K562 (cell line): ENCODE measurements at regions of chr6 and their contacts with region 1.

Region 1: GRCh38 chr6:43900911-43901732 is 131.1 kb downstream of the VEGFA start:
- DNase-seq: no peak
- ATAC-seq: no peak; the same call in 1 of the 3 replicates
- H3K4me3 ChIP-seq: no peak overlapping the region
- H3K27ac ChIP-seq: no peak overlapping the region; the same call in 2 of the 3 replicates
- H3K4me1 ChIP-seq: peaks cover 16 to 35% of the 10 kb centered on the region in 2 experiments; a peak in 4 of 5 replicates
- H3K27me3 ChIP-seq: no peaks in the 10 kb centered on the region
- CTCF ChIP-seq: no peak
- EP300 ChIP-seq: no peak
- POLR2A ChIP-seq: no peak
- RAD21 ChIP-seq: no peak

Region 2: GRCh38 chr6:43887340-43887858 is 13.7 kb before region 1 on chr6:
- CTCF ChIA-PET with region 1: interaction called, 3 read pairs
- POLR2A ChIA-PET with region 1: interaction called, 11 read pairs
- in situ Hi-C with region 1: no loop called
- intact Hi-C with region 1: no loop called
- DNase-seq: no peak
- ATAC-seq: peak; percentile 39
- H3K4me3 ChIP-seq: no peak overlapping the region
- H3K27ac ChIP-seq: no peak overlapping the region
- H3K4me1 ChIP-seq: peaks cover 20 to 28% of the 10 kb centered on the region in 2 experiments
- H3K27me3 ChIP-seq: no peaks in the 10 kb centered on the region
- CTCF ChIP-seq: no peak
- EP300 ChIP-seq: no peak
- POLR2A ChIP-seq: no peak
- RAD21 ChIP-seq: no peak